ENCODE measurements at regions of chr17 and their contacts with region 1.

Region 1: DNA sequence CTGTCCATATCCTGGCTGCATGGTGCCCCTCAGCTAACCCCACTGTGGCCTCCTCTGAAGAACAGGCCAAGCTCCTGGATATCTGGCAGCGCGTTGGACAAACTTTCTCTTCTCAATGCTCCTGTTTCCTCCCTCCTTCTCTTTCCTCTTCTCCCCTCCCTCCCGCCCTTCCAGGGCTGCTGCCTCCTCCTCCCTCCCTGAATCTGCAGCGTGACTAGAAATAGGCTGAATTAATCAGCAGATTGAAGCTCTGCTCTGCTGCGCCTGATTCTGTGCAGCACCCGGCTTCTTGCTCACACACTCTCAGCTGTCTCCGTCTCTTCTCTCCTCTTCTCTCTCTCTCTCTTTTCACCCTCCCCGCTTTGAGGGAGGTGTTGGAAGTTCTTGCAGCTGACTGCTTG is 19.8 kb downstream of the TMEM94 start:
- DNase-seq: peak in 1 of 2 donors; percentile 72
- ATAC-seq: peak; percentile 67
- H3K4me3 ChIP-seq: no peak overlapping the region
- H3K27ac ChIP-seq: peak overlapping the region in 1 of 2 donors; percentile 86
- H3K4me1 ChIP-seq: no peaks in the 10 kb centered on the region
- H3K27me3 ChIP-seq: no peaks in the 10 kb centered on the region

Region 2: DNA sequence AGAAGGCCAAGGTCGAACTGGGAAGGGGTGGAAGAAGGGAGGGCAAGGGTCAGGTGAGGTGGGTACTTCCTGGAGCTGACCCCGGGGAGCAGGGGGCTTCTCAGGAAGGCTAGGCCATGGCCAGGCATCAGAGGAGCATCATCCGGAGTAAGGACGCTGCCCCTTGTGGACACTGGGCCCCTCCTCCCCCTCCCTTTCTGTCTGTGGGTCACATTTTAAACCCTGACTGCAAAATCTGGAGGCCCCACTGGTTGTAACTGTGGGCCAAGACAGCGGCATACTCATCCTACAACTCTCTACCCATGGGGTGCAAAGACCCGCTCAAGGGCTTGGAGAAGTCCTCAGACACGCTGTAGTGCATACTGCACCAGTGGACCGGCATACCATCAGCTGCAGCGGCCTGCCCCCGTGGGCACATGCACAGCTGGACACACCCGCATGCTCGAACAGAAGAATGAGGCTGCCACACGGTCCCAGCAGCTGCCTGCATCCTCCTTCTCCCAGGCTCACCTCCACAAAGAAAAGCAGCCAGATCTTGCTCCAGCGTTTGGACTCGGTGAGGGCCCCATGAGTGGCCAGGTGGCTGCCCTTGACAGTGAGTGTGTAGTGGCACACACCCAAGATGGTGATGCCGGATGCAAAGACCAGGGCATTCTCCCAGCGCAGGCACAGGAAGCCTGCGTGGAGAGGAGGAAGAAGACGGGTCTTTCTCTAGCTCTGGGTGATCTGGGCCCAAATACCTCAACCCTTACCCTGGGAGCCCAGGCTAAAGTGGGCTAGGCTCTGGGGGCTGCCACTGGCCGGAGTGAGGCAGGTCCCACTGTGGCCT is 584.0 kb before region 1 on chr17:
- intact Hi-C with region 1: no loop called
- DNase-seq: no peak
- ATAC-seq: no peak
- H3K4me3 ChIP-seq: no peak overlapping the region
- H3K27ac ChIP-seq: no peak overlapping the region
- H3K4me1 ChIP-seq: no peaks in the 10 kb centered on the region
- H3K27me3 ChIP-seq: no peaks in the 10 kb centered on the region

Region 3: GRCh38 chr17:75430159-75430974 is 45.9 kb before region 1 on chr17:
- intact Hi-C with region 1: loop called in 1 of 2 experiments (anchors 10 kb)
- DNase-seq: peak; percentile 56 to 81
- ATAC-seq: peak; percentile 17
- H3K4me3 ChIP-seq: no peak overlapping the region
- H3K27ac ChIP-seq: peak overlapping the region; percentile 73 to 76
- H3K4me1 ChIP-seq: peaks cover 2 to 3% of the 10 kb centered on the region in 2 donors
- H3K27me3 ChIP-seq: no peaks in the 10 kb centered on the region

Region 4: GRCh38 chr17:75440738-75441448 is 35.4 kb before region 1 on chr17:
- intact Hi-C with region 1: loop called in 1 of 2 experiments (anchors 5 kb)
- DNase-seq: no peak
- ATAC-seq: no peak
- H3K4me3 ChIP-seq: no peak overlapping the region
- H3K27ac ChIP-seq: peak overlapping the region in 1 of 2 donors; percentile 79
- H3K4me1 ChIP-seq: no peaks in the 10 kb centered on the region
- H3K27me3 ChIP-seq: no peaks in the 10 kb centered on the region